BJ (cell line): ENCODE measurements at regions of chr2 and their contacts with region 1.

Region 1: DNA sequence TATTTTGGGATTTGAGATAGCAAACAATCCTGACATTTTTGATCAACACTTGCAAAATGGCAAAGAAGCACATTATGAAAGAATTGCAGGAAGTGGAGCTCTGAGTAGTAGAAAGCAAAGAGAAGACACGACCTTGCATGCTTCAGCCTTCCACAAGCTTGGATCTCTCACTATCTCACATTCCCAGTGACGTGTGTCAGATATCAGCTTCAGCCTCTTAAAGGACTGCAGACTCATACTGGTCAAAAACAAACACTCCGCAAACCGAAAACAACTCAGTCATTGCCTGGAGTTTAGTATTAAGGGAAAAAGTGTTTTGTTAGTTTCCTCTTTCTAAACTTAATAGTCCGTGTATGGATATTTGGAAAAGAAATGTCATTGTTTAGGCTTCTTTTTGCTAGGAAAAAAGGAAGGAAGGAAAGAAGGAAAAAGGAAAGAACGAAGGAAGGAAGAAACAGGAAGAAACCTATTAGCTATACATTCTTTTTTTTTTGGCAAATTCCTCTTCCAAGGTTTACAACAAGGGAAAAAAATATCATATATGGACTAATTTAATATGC is 32.6 kb upstream of the SLC40A1 start:
- DNase-seq: peak; percentile 44
- H3K4me3 ChIP-seq: peak overlapping the region; percentile 9
- H3K27me3 ChIP-seq: no peaks in the 10 kb centered on the region
- CTCF ChIP-seq: no peak

Region 2: GRCh38 chr2:189625638-189626037 is 12.5 kb after region 1 on chr2:
- CTCF ChIA-PET with region 1: interaction called, 10 read pairs
- POLR2A ChIA-PET with region 1: no interaction called
- DNase-seq: no peak
- H3K4me3 ChIP-seq: no peak overlapping the region
- H3K27me3 ChIP-seq: no peaks in the 10 kb centered on the region; the same call in 1 of the 2 replicates
- CTCF ChIP-seq: no peak